ENCODE measurements at regions of chr14 and their contacts with region 1.

Region 1: DNA sequence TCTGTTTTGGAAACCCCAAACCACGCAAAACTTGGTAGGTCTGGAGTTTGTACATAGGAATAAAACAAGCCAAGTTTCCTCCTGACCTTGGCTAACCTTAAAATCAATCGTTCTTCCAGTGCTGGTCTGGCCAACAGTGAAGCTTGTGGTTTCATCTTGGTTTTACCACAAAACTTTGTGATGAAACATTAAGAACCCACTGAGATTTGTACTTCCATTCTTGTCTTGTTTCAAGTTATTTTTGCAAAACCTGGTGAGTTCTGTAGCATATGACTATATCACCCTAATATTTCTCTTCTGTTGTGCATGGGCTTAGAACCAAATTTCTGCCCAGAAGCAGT is 26.4 kb downstream of the SIX1 start:
- DNase-seq: no peak
- H3K4me3 ChIP-seq: no peak overlapping the region
- H3K27ac ChIP-seq: no peak overlapping the region
- H3K4me1 ChIP-seq: peaks cover 0 to 12% (median 3%) of the 10 kb centered on the region in 4 donors
- H3K27me3 ChIP-seq: peaks cover 4% of the 10 kb centered on the region
- CTCF ChIP-seq: no peak
- EP300 ChIP-seq: no peak
- POLR2A ChIP-seq: no peak

Region 2: DNA sequence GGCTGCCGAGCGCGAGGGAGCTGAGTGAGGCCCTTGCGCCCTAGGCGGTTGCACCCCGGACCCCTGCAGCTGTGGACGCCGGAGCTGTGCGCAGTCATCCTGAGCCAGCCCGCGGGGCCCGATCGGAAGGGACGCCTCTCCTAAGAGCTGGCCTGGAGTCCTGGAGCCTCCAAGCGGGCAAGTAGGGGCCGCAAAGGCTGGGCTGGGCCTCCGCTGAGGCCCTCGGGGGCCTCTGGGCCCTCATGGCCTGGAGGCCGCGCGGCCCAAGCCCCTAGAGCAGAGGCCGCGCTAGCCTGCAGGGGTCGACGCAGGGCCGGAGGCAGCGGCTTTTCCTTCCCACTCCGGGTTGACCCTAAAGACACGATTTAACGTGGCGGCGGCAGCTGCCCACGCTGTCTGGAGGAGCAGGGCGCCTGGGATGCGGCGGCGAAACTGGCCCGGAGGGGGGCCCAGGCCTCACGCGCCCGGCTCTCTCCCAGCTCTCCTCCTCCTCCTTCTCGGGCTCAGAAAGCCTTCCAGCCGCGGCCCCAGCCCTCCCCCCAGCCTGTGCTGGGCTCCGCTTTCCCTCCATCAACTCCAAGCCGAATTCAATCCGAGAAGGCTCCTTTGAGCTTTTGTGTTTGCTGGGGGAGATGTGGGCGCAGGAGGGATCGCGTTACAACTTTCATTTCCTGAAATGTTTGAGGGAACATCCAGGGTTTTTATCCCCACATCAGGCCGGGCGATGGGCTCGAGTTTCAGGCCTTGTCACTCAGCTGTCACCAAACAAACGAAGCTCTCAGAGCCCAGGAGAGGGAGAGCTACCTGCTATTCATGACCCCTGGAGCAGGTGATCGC is 14.8 kb after region 1 on chr14:
- in situ Hi-C with region 1: no loop called
- intact Hi-C with region 1: no loop called
- DNase-seq: no peak
- H3K4me3 ChIP-seq: peak overlapping the region in 2 of 4 donors; percentile 16 to 46
- H3K27ac ChIP-seq: no peak overlapping the region
- H3K4me1 ChIP-seq: peaks cover 3 to 24% (median 19%) of the 10 kb centered on the region in 4 donors
- H3K27me3 ChIP-seq: peaks cover 93% of the 10 kb centered on the region
- CTCF ChIP-seq: no peak
- EP300 ChIP-seq: no peak
- POLR2A ChIP-seq: no peak

Region 3: DNA sequence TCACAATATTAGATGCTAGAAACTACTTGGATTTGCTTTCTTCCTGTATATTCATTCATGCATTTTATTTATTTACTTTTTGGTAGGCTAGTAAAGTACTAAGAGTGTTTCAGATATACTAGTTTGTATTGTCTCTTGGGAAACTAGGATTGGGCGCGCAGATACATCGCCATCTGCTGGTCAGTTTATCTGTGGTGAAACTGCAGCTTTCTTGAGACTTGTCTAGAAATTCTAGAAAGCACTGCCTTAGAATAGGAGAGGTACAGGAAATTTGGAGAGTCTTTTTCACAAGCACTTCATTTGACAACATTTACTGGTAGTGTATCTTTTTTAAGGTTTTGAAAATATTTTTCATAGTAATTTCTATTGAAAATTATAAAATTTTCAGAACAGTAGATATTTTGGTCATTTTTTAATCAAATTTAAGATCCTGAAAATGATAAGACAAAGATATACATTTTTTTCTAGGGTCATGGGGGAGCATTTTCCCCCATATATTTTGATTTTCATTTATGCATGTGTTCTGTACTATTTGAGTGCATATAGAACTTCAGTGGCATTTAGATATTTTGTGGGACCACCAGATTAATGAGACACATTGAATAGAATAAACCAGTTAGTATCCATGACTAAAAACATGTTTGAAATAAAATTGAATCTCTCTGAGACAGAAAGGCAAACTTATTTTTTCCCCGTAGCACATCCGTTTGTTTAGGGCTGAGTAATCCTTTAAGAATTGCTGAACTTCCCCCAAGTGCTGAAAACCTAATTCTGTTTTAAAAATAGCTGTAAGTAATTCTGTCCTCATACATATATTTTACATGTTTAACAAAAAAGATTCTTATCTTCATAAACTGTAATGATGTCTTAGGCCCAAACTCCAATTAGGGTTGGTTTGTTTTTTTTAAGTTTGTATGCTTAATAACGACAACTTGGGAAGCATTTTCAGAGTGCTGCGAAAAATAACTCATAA is 402.6 kb after region 1 on chr14:
- in situ Hi-C with region 1: loop called in 2 of 4 experiments (anchors 10 kb)
- intact Hi-C with region 1: loop called (anchors 10 kb)
- DNase-seq: peak; percentile 54
- H3K4me3 ChIP-seq: no peak overlapping the region
- H3K27ac ChIP-seq: no peak overlapping the region
- H3K4me1 ChIP-seq: no peaks in the 10 kb centered on the region
- H3K27me3 ChIP-seq: no peaks in the 10 kb centered on the region
- CTCF ChIP-seq: peak; percentile 73 to 86 (median 82)
- EP300 ChIP-seq: no peak
- POLR2A ChIP-seq: no peak

Region 4: DNA sequence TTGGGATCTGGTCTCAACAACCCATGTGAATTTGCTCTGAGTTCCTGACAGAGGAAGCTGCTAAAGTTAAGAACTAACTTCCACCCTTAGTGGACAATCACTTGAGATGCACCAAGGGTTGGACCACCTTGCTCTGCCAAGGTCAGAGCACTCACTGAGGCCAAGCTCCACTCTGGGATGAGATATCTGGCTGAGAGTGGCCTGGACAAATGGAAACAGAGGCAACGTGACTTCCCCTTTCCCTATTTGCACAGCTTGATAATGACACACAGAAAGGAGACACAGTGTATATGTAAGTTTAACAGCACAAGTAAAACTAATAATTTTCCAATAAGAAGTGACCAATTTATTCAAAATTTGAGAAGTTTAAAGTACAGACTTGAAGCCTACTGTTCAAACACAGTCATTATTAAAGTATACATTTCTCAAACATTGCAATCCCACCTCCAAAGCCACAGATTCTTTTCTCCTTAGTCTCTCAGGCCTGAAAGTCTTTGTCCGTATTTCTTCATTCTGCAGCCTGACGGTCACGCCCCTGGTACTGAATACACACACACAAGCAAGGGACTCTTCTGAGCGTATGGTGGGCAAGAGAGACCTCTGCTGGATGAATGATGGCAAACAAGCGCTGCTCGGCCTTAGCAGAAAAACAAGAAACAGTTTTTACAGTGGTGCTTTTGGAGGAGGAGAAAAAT is 629.6 kb after region 1 on chr14:
- in situ Hi-C with region 1: loop called (anchors 5 to 10 kb)
- intact Hi-C with region 1: loop called (anchors 5 kb)
- DNase-seq: peak; percentile 56
- H3K4me3 ChIP-seq: no peak overlapping the region
- H3K27ac ChIP-seq: no peak overlapping the region
- H3K4me1 ChIP-seq: no peaks in the 10 kb centered on the region
- H3K27me3 ChIP-seq: peaks cover 17% of the 10 kb centered on the region
- CTCF ChIP-seq: peak; percentile 58 to 69 (median 64)
- EP300 ChIP-seq: no peak
- POLR2A ChIP-seq: no peak

Region 5: DNA sequence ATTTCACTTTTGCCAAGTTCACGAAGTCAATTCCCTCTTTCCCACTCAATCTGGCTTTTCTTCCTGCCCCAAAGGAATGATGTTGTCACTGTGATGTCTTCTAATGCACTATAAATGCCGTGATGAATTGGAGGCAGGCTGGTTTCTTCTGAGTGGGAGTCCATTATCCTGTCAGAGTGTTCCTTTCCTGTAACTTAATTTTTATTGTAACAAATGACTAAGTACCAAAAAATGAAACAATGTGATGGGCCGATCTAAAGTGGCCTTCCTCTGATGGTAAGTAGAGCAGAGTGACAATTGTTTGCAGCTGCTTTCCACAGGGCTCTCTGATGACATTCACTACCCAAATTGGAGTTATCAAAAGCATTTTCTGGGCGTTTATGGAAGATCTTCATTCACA is 636.1 kb after region 1 on chr14:
- in situ Hi-C with region 1: loop called (anchors 5 to 10 kb)
- intact Hi-C with region 1: loop called (anchors 5 kb)
- DNase-seq: no peak
- H3K4me3 ChIP-seq: no peak overlapping the region
- H3K27ac ChIP-seq: no peak overlapping the region
- H3K4me1 ChIP-seq: no peaks in the 10 kb centered on the region
- H3K27me3 ChIP-seq: peaks cover 20% of the 10 kb centered on the region
- CTCF ChIP-seq: no peak
- EP300 ChIP-seq: no peak
- POLR2A ChIP-seq: no peak